ENCODE measurements at regions of chr5 and their contacts with region 1.

Region 1: GRCh38 chr5:59608745-59609144 is 284.8 kb downstream of the PDE4D start:
- DNase-seq: no peak
- H3K4me3 Mint-ChIP-seq: no peak overlapping the region
- H3K27ac Mint-ChIP-seq: no peak overlapping the region
- H3K4me1 Mint-ChIP-seq: peaks cover 10% of the 10 kb centered on the region
- H3K27me3 Mint-ChIP-seq: peaks cover 9% of the 10 kb centered on the region

Region 2: DNA sequence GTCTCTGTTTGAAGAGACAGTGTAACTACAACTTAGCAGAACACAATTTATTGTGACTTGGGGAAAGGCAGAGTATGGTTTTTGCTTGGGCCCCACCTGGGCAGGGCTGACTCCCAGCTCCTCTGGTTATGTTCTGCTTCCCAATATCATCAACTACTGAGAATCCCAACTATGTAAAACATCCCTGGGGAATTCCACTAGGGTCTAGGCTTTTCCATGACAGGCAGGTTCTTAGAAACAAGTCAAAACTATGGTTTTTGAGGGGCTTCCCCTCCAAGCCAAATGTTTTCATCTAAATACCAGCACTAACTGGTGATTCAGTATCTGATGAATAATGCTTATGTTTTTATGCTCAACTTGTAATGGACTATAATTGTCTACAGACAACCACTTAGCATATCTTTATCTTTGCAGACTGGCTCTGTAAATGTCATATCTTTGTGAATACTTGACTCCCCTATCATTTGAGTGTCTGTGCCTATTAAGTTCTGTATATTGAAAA is 124.7 kb before region 1 on chr5:
- CTCF ChIA-PET with region 1: no interaction called
- POLR2A ChIA-PET with region 1: no interaction called
- intact Hi-C with region 1: loop called (anchors 1 kb)
- DNase-seq: no peak
- H3K4me3 Mint-ChIP-seq: no peak overlapping the region
- H3K27ac Mint-ChIP-seq: peak overlapping the region; percentile 75
- H3K4me1 Mint-ChIP-seq: peaks cover 14% of the 10 kb centered on the region
- H3K27me3 Mint-ChIP-seq: peaks cover 4% of the 10 kb centered on the region

Region 3: DNA sequence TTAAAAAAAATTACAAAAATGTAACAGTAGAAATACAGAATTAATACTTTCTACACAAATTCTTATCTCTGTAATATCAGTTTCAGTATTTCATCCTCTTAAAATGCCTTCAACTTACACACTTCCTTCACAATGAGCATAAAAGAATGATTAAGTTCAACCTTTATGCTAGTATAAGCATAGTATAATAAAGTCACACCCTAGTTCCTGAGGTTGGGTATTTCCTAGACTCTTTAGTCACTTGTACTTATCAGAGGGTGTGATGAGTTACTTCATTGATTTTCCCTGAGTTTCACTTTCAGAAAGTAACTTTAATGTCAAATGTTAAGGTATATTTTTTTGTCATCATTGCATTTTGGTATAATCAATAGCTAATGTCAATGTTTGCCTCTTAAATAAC is 17.6 kb before region 1 on chr5:
- CTCF ChIA-PET with region 1: interaction called, 3 read pairs
- POLR2A ChIA-PET with region 1: no interaction called
- intact Hi-C with region 1: loop called (anchors 1 kb)
- DNase-seq: no peak
- H3K4me3 Mint-ChIP-seq: no peak overlapping the region
- H3K27ac Mint-ChIP-seq: no peak overlapping the region
- H3K4me1 Mint-ChIP-seq: peaks cover 2% of the 10 kb centered on the region
- H3K27me3 Mint-ChIP-seq: peaks cover 6% of the 10 kb centered on the region

Region 4: GRCh38 chr5:59956130-59956783 is 347.5 kb after region 1 on chr5:
- CTCF ChIA-PET with region 1: no interaction called
- POLR2A ChIA-PET with region 1: no interaction called
- intact Hi-C with region 1: no loop called
- DNase-seq: no peak
- H3K4me3 Mint-ChIP-seq: no peak overlapping the region
- H3K27ac Mint-ChIP-seq: no peak overlapping the region
- H3K4me1 Mint-ChIP-seq: no peaks in the 10 kb centered on the region
- H3K27me3 Mint-ChIP-seq: no peaks in the 10 kb centered on the region

Region 5: DNA sequence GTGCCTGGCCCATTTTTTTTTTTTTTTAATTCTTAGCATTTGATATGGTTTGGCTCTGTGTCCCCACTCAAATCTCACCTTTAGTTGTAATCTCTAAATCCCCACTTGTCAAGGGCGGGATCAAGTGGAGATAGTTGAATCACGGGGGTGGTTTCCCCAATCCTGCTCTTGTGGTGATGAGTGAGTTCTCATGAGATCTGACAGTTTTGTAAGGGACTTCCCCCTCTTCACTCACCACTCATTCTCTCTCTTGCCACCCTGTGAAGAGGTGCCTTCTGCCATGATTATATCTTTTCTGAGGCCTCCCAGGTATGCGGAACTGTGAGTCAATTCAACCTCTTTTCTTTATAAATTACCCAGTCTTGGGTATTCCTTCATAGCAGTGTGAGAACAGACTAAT is 1363.5 kb after region 1 on chr5:
- CTCF ChIA-PET with region 1: no interaction called
- POLR2A ChIA-PET with region 1: no interaction called
- intact Hi-C with region 1: loop called (anchors 5 kb)
- DNase-seq: peak; percentile 73
- H3K4me3 Mint-ChIP-seq: no peak overlapping the region
- H3K27ac Mint-ChIP-seq: no peak overlapping the region
- H3K4me1 Mint-ChIP-seq: peaks cover 14% of the 10 kb centered on the region
- H3K27me3 Mint-ChIP-seq: no peaks in the 10 kb centered on the region

Measured in activated CD4-positive, alpha-beta memory T cell treated with anti-CD3 and anti-CD28 coated beads for 36 hours (primary cell).